Left ventricle myocardium inferior (tissue), 1 donor: ENCODE measurements at regions of chr3 and their contacts with region 1.

Region 1: DNA sequence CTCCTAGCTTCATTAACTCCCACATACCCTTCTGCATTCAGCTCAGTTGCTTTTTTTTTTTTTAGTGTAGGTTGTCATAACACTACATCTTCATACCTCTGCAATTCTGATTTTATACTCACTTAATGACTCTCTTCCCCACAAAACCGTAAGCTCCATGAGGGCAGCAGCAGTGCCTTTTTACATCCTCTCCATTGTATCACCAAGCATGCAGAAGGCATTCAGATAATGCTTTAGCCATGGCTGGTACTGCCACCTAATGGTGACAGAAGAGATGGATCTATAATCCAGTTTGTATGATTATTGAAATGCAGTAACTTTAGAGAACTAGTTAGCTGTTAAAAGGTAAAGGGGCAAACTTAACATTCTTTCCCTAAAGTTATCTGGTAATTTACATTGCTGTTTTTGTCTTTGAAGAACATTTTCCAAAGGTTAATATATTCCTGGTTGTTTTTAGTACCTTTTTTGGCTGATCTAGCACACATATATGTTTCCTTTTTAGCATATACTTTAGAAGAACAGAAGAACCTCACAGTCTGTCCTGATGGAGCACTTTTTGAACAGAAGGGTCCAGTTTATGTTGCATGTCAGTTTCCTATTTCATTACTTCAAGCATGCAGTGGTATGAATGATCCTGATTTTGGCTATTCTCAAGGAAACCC is 36.8 kb downstream of the ATP1B3 start:
- DNase-seq: no peak
- H3K4me3 ChIP-seq: no peak overlapping the region
- H3K27ac ChIP-seq: no peak overlapping the region
- H3K4me1 ChIP-seq: no peaks in the 10 kb centered on the region
- H3K27me3 ChIP-seq: no peaks in the 10 kb centered on the region
- CTCF ChIP-seq: peak; percentile 79

Region 2: DNA sequence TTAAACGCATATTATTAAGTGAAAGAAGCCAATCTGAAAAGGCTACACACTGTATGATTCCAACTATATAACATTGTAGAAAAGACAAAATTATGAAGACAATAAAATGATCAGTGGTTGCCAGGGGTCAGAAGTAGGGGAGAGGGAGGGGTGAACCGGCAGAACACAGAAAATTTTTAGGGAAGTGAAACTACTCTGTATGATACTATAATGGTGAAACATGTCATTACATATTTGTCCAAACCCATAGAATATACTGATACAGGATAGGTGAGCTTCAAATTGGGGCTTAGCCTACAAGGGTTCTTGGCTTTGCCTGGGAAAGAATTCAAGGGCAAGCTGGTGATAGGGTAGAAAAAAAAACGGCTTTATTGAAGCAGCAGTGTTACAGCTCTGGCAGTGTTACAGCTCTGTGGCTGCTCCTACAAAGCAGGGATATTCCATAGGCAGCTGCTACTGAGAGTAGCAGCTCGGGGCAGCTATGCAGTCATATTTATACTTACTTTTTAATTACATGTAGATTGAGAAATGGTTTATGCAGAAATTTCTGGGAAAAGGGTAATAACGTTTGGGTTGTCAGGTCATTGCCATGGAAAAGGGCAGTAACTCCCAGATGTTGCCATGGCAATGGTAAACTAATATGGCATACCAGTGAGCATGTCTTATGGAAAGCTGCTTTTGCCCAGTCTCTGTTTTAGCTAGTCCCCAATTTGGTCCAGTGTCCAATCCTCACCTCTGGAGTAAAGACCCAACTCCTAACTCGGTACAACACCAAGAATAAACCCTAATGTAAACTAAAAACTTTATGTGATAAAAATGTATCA is 1096.7 kb before region 1 on chr3:
- intact Hi-C with region 1: no loop called
- DNase-seq: no peak
- H3K4me3 ChIP-seq: no peak overlapping the region
- H3K27ac ChIP-seq: no peak overlapping the region
- H3K4me1 ChIP-seq: no peaks in the 10 kb centered on the region
- H3K27me3 ChIP-seq: peaks cover 7% of the 10 kb centered on the region
- CTCF ChIP-seq: no peak

Region 3: GRCh38 chr3:141575879-141576743 is 337.2 kb before region 1 on chr3:
- intact Hi-C with region 1: loop called (anchors 10 kb)
- DNase-seq: no peak
- H3K4me3 ChIP-seq: no peak overlapping the region
- H3K27ac ChIP-seq: no peak overlapping the region
- H3K4me1 ChIP-seq: peaks cover 13% of the 10 kb centered on the region
- H3K27me3 ChIP-seq: no peaks in the 10 kb centered on the region
- CTCF ChIP-seq: peak; percentile 65